ENCODE measurements at regions of chr22 and their contacts with region 1.

Region 1: GRCh38 chr22:23857606-23858483 is at the start of gene SLC2A11:
- DNase-seq: peak; percentile 90 to 95 (median 92)
- H3K4me3 ChIP-seq: peak within 1 kb of the TSS; percentile 86 to 98
- H3K4me3 Mint-ChIP-seq: peak within 1 kb of the TSS; percentile 92 to 98 (median 95)
- H3K27ac ChIP-seq: peak within 1 kb of the TSS; percentile 76
- H3K27ac Mint-ChIP-seq: peak within 1 kb of the TSS; percentile 84 to 94 (median 89)
- H3K4me1 ChIP-seq: peaks cover 19% of the 10 kb centered on the region
- H3K4me1 Mint-ChIP-seq: peaks cover 14 to 24% (median 19%) of the 10 kb centered on the region in 4 donors
- H3K27me3 ChIP-seq: no peaks in the 10 kb centered on the region
- H3K27me3 Mint-ChIP-seq: no peaks in the 10 kb centered on the region
- total RNA-seq, gene SLC2A11: 24.5 to 27.2 TPM

Region 2: DNA sequence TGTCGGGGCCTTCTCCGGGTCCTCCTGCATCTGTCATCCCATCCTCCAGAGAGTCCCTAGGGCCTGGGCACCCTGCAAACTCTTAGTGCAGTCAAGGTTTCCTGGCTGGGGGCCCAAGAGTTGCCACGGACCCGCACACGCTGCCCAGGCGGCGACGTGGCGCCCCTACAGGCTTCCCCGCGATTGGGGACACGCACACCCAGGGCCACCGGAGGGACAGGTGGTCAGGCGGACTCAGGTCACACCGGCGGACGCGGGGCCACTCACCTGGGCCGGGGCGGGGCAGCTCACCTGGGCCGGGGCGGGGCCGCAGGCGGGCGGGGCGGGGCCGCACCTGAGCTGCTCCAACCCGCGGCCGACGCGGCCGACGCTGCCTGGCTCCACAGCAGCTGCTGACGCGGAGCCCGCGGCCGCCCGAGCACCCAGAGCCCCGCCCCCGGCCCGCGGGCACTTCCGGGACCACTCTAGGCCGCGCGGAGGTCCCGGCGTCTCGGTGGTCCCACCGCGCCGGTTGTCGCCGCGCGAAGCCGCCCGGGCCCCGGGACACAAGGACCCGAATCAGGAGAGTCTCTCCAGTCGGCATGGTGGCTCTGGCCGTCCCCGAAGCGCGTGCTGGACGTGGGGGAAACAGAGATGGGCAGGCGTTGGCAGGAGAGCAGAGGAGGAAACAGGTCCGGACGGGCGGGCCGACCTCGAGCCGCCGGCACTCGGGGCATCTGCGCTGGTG is 107.0 kb before region 1 on chr22 and contains the start of gene ZNF70:
- CTCF ChIA-PET with region 1: interaction called, 4 read pairs
- POLR2A ChIA-PET with region 1: interaction called, 10 read pairs
- intact Hi-C with region 1: no loop called
- DNase-seq: peak; percentile 83 to 88 (median 86)
- H3K4me3 ChIP-seq: peak within 1 kb of the TSS; percentile 73 to 82
- H3K4me3 Mint-ChIP-seq: peak within 1 kb of the TSS; percentile 76 to 85 (median 80)
- H3K27ac ChIP-seq: peak within 1 kb of the TSS; percentile 67
- H3K27ac Mint-ChIP-seq: peak within 1 kb of the TSS; percentile 69 to 87 (median 78)
- H3K4me1 ChIP-seq: peaks cover 13% of the 10 kb centered on the region
- H3K4me1 Mint-ChIP-seq: peaks cover 7 to 21% (median 12%) of the 10 kb centered on the region in 4 donors
- H3K27me3 ChIP-seq: no peaks in the 10 kb centered on the region
- H3K27me3 Mint-ChIP-seq: no peaks in the 10 kb centered on the region
- total RNA-seq, gene ZNF70: 6.4 to 7.4 TPM

Region 3: DNA sequence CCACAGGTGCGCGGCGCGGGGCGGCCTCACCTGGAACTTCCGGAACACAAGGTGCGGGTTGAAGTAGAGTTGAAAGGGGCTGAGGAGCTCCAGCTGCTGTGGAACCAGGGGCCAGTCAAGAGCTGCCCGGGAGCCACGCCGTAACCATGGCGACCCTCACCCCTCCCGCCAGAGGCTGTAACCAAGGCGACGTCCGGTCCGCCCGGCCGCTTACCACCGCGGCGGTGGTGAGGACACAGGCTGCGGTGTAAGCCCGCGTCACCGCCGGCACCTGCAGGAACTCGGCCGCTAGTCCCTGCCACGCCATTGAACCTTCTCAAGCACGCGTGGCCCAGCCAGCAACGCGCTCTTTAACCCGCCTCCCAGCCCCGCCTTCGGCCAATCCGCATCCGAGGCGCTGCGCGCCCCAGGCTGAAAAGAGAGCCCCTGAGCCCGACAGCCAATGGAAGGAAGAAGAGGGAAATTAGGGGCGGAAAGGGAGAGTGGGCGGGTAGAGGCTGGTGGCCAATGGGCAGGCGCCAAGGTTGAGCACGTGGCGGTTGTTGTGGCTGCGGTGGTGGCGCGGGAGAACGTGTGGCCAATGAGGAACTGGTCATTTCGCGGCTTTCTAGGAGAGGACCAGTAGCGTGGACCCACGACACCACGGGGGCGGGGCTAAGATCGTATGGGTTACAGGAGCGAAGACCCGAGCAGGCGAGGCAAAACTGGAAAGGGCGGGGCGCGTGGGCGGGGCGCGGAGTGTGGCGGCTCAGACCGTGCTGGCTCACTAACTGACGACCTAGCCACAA is 19.0 kb before region 1 on chr22 and contains the start of gene DERL3:
- CTCF ChIA-PET with region 1: interaction called, 4 read pairs
- POLR2A ChIA-PET with region 1: interaction called, 16 read pairs
- intact Hi-C with region 1: no loop called
- DNase-seq: peak; percentile 93 to 96 (median 95)
- H3K4me3 ChIP-seq: peak within 1 kb of the TSS in 1 of 2 donors; percentile 83
- H3K4me3 Mint-ChIP-seq: peak within 1 kb of the TSS; percentile 85 to 96 (median 91)
- H3K27ac ChIP-seq: peak within 1 kb of the TSS; percentile 24
- H3K27ac Mint-ChIP-seq: peak within 1 kb of the TSS; percentile 83 to 97 (median 93)
- H3K4me1 ChIP-seq: peaks cover 14% of the 10 kb centered on the region
- H3K4me1 Mint-ChIP-seq: peaks cover 14 to 30% (median 20%) of the 10 kb centered on the region in 4 donors
- H3K27me3 ChIP-seq: no peaks in the 10 kb centered on the region
- H3K27me3 Mint-ChIP-seq: no peaks in the 10 kb centered on the region
- total RNA-seq, gene DERL3: 1.9 to 2.9 TPM

Region 4: DNA sequence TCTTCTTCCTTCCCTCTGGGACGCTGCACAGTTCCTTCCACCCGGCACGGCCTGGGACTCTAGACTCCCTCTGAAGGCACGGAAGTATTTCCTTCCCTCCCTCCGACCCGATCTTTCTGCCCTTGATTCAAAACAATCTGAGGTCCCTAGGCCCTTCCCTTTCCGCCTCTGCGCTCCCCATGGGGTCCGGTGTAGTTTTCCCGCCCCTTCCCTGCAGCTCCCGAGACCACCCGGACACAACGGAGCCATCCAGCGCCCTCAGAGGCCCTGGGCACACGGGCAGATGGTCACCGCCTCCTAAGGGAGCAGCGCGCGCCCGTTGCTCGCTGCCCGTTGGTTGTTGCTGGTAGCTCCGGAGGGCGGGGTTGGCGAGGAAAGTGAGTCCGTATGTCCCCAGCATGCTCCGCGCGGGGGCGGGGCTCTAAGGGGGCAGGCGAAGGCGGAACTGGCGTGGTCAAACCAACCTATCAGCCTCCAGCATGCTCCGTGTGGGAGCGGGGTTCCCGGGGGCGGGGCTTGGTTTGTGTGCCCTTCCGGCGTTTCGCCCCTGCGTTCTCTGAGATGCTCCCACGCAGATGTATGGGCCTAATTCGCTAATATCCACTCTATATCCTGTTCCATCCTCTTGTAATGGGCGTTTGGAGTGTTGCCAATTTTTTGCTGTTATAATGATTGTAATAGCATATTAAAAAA is 56.0 kb after region 1 on chr22:
- CTCF ChIA-PET with region 1: no interaction called
- POLR2A ChIA-PET with region 1: interaction called, 19 read pairs
- intact Hi-C with region 1: no loop called
- DNase-seq: peak; percentile 96 to 99 (median 97)
- H3K4me3 ChIP-seq: peak overlapping the region; percentile 57 to 86
- H3K4me3 Mint-ChIP-seq: peak overlapping the region; percentile 91 to 99 (median 96)
- H3K27ac ChIP-seq: peak overlapping the region; percentile 79
- H3K27ac Mint-ChIP-seq: peak overlapping the region; percentile 88 to 98 (median 96)
- H3K4me1 ChIP-seq: peaks cover 7% of the 10 kb centered on the region
- H3K4me1 Mint-ChIP-seq: peaks cover 9 to 25% (median 15%) of the 10 kb centered on the region in 4 donors
- H3K27me3 ChIP-seq: no peaks in the 10 kb centered on the region
- H3K27me3 Mint-ChIP-seq: no peaks in the 10 kb centered on the region